Activated CD4-positive, alpha-beta memory T cell treated with anti-CD3 and anti-CD28 coated beads for 36 hours (primary cell): ENCODE measurements at regions of chr17 and their contacts with region 1.

Region 1: GRCh38 chr17:64117981-64118979 is 11.7 kb downstream of the ERN1 start:
- DNase-seq: no peak
- H3K4me3 Mint-ChIP-seq: no peak overlapping the region
- H3K27ac Mint-ChIP-seq: peak overlapping the region; percentile 71
- H3K4me1 Mint-ChIP-seq: peaks cover 78% of the 10 kb centered on the region
- H3K27me3 Mint-ChIP-seq: no peaks in the 10 kb centered on the region

Region 2: GRCh38 chr17:64081802-64082799 is 36.2 kb before region 1 on chr17:
- CTCF ChIA-PET with region 1: interaction called, 8 read pairs
- POLR2A ChIA-PET with region 1: interaction called, 8 read pairs
- intact Hi-C with region 1: loop called (anchors 1 kb)
- DNase-seq: peak; percentile 74
- H3K4me3 Mint-ChIP-seq: peak overlapping the region; percentile 49
- H3K27ac Mint-ChIP-seq: no peak overlapping the region
- H3K4me1 Mint-ChIP-seq: peaks cover 29% of the 10 kb centered on the region
- H3K27me3 Mint-ChIP-seq: no peaks in the 10 kb centered on the region

Region 3: DNA sequence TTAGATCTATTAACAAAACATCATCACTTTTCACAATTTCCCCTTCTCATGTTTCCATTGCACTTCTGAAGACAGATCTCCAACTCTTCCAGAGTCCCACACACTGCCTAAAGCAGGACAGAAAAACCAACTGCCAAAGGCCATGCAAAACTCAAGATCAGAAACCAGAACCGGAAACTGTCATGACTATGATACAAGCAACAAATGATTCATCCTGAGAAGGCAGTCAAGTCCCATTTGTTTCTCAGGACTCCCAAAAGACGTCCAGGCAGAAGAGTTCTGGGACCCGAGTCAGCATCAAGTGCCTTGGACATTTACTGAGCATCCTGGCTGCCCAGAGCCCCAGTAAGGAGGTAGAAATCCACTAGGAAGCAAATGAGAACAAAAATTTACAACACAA is 27.2 kb before region 1 on chr17:
- CTCF ChIA-PET with region 1: interaction called, 3 read pairs
- POLR2A ChIA-PET with region 1: interaction called, 8 read pairs
- intact Hi-C with region 1: loop called (anchors 1 kb)
- DNase-seq: peak; percentile 46
- H3K4me3 Mint-ChIP-seq: peak overlapping the region; percentile 68
- H3K27ac Mint-ChIP-seq: peak overlapping the region; percentile 95
- H3K4me1 Mint-ChIP-seq: peaks cover 89% of the 10 kb centered on the region
- H3K27me3 Mint-ChIP-seq: no peaks in the 10 kb centered on the region